Sigmoid colon (tissue), 7 donors: ENCODE measurements at regions of chr1 and their contacts with region 1.

Region 1: GRCh38 chr1:33228935-33229487 is 27.3 kb upstream of the ZNF362 start:
- DNase-seq: peak; percentile 75
- H3K4me3 ChIP-seq: no peak overlapping the region
- H3K27ac ChIP-seq: peak overlapping the region in 3 of 4 donors; percentile 44 to 48 (median 45)
- H3K4me1 ChIP-seq: peaks cover 0 to 19% (median 13%) of the 10 kb centered on the region in 4 donors
- H3K27me3 ChIP-seq: no peaks in the 10 kb centered on the region
- CTCF ChIP-seq: no peak
- EP300 ChIP-seq: no peak
- POLR2A ChIP-seq: no peak

Region 2: DNA sequence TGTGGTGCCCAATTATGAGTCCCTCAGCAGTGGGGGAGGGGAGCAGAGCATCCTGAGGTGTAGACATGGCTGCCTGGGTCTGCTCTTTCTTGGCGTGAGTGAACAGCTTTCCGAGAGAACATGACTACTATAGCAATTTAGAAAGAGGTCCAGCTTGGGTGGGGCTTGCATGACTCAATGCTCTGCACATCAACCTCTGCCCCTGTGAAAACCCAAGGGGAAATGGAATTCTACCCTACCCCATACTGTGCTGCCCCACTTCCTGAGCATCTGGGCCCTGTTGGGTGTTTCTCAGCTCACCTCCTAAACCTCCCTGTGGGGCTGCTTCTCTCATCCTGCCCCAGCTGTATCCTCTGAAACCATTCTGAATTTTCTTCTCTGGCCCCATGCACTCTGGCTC is 156.3 kb before region 1 on chr1:
- intact Hi-C with region 1: no loop called
- DNase-seq: no peak
- H3K4me3 ChIP-seq: no peak overlapping the region
- H3K27ac ChIP-seq: no peak overlapping the region
- H3K4me1 ChIP-seq: no peaks in the 10 kb centered on the region
- H3K27me3 ChIP-seq: no peaks in the 10 kb centered on the region
- CTCF ChIP-seq: no peak
- EP300 ChIP-seq: no peak
- POLR2A ChIP-seq: no peak

Region 3: GRCh38 chr1:33327587-33328315 is 98.7 kb after region 1 on chr1:
- intact Hi-C with region 1: no loop called
- DNase-seq: peak; percentile 87
- H3K4me3 ChIP-seq: no peak overlapping the region
- H3K27ac ChIP-seq: peak overlapping the region; percentile 52 to 100 (median 78)
- H3K4me1 ChIP-seq: peaks cover 0 to 61% (median 48%) of the 10 kb centered on the region in 4 donors
- H3K27me3 ChIP-seq: no peaks in the 10 kb centered on the region
- CTCF ChIP-seq: no peak
- EP300 ChIP-seq: no peak
- POLR2A ChIP-seq: no peak

Region 4: GRCh38 chr1:33460947-33461629 is 232.1 kb after region 1 on chr1:
- intact Hi-C with region 1: loop called (anchors 10 kb)
- DNase-seq: peak; percentile 77
- H3K4me3 ChIP-seq: no peak overlapping the region
- H3K27ac ChIP-seq: peak overlapping the region; percentile 71 to 91 (median 81)
- H3K4me1 ChIP-seq: peaks cover 0 to 68% (median 53%) of the 10 kb centered on the region in 4 donors
- H3K27me3 ChIP-seq: no peaks in the 10 kb centered on the region
- CTCF ChIP-seq: no peak
- EP300 ChIP-seq: no peak
- POLR2A ChIP-seq: no peak

Region 5: GRCh38 chr1:33560680-33561079 is 331.7 kb after region 1 on chr1:
- intact Hi-C with region 1: no loop called
- DNase-seq: no peak
- H3K4me3 ChIP-seq: no peak overlapping the region
- H3K27ac ChIP-seq: no peak overlapping the region
- H3K4me1 ChIP-seq: no peaks in the 10 kb centered on the region
- H3K27me3 ChIP-seq: no peaks in the 10 kb centered on the region
- CTCF ChIP-seq: no peak
- EP300 ChIP-seq: no peak
- POLR2A ChIP-seq: no peak